ENCODE measurements at regions of chr14 and their contacts with region 1.

Region 1: DNA sequence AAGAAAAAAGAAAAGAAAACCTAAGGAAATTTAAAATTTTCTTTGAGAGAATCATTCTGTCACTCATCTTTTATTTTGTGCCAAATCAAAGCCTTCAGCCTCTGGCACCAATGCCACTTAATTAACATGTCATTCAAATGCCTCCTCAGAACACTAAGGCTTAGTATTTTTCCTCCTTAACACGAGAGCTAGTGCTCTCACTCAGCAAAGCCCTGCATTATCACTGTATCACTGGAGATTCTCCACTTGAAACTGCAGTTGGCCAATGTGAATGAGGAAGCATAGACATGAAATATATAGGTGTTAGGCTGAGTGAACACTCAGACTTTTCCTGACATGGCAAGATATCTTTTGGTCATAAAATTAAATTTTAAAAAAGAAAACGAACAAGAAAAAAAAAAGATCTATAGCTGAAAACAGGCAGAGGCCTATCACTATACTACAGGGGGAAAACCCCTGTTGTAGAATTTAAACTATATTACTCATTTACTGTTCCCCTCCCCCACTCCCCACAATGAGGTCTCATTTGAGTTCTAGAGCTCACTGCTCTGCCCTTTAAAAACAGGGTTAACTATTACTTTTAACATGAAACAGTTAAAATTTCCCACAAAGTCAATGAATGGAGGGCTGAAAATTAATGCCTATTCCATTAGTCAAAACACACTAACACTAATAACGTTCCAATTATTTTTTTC is 5.1 kb downstream of the MBIP start:
- DNase-seq: no peak
- ATAC-seq: no peak
- H3K4me3 ChIP-seq: no peak overlapping the region
- H3K4me3 Mint-ChIP-seq: no peak overlapping the region
- H3K27ac ChIP-seq: no peak overlapping the region
- H3K27ac Mint-ChIP-seq: no peak overlapping the region
- H3K4me1 ChIP-seq: peaks cover 0 to 9% of the 10 kb centered on the region in 2 donors
- H3K4me1 Mint-ChIP-seq: peaks cover 14 to 50% (median 45%) of the 10 kb centered on the region in 7 donors
- H3K27me3 ChIP-seq: no peaks in the 10 kb centered on the region
- H3K27me3 Mint-ChIP-seq: no peaks in the 10 kb centered on the region

Region 2: DNA sequence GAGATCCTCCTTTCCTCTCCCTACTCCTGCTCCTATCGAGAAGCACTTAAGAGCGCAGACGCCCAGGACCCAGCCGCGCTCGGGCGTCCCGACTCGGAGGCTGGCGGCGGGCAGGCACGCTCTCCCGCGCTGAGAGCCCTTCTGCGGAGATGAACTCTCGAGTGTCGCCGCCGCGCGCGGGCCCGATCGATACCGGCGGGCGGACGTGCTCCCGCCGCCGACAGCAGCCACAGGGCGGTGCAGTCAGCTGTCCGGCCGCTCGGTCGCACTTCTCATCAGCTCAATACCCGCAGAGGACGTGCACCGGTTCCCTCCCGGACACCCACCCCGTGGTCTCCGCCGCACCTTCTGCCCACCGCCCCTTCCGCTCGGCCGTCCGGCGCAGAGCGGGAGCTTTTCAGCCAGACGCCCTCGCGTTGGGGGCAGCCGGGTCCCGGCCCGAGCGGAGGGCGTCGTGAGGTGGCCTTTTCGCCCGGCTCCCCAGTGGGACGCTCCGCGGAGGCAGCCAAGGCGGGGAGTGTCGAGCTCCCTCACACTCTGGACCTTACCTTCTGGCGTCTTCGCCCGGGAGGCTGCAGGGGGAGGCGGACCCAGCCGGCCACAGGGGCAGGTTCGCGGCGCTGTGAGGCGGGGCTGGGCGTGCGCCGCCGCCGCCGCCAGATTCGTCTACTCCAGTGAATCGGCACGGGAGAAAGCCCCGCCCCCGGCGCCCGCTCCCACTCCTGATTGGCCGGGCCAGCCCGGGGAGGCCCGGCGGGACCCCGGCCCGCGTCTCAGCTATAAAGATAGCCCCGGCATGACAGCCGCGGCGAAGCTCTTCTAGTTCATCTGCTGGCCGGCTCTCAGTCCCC is 781.7 kb before region 1 on chr14 and contains the start of gene INSM2:
- CTCF ChIA-PET with region 1: no interaction called
- POLR2A ChIA-PET with region 1: no interaction called
- intact Hi-C with region 1: loop called in 1 of 2 experiments (anchors 10 kb)
- DNase-seq: peak in 8 of 9 donors; percentile 9 to 76 (median 21)
- ATAC-seq: peak; percentile 65
- H3K4me3 ChIP-seq: peak within 1 kb of the TSS; percentile 49
- H3K4me3 Mint-ChIP-seq: peak within 1 kb of the TSS; percentile 74 to 86 (median 82)
- H3K27ac ChIP-seq: no peak within 1 kb of the TSS
- H3K27ac Mint-ChIP-seq: no peak within 1 kb of the TSS
- H3K4me1 ChIP-seq: peaks cover 0 to 7% of the 10 kb centered on the region in 2 donors
- H3K4me1 Mint-ChIP-seq: peaks cover 0 to 23% (median 13%) of the 10 kb centered on the region in 7 donors
- H3K27me3 ChIP-seq: peaks cover 3 to 11% of the 10 kb centered on the region in 2 donors
- H3K27me3 Mint-ChIP-seq: peaks cover 53 to 81% (median 60%) of the 10 kb centered on the region in 5 donors
- total RNA-seq, gene INSM2: not detected

Region 3: GRCh38 chr14:36091096-36091495 is 224.2 kb before region 1 on chr14:
- CTCF ChIA-PET with region 1: no interaction called
- POLR2A ChIA-PET with region 1: no interaction called
- intact Hi-C with region 1: no loop called
- DNase-seq: no peak
- ATAC-seq: no peak
- H3K4me3 ChIP-seq: no peak overlapping the region
- H3K4me3 Mint-ChIP-seq: no peak overlapping the region
- H3K27ac ChIP-seq: no peak overlapping the region
- H3K27ac Mint-ChIP-seq: no peak overlapping the region
- H3K4me1 ChIP-seq: no peaks in the 10 kb centered on the region
- H3K4me1 Mint-ChIP-seq: no peaks in the 10 kb centered on the region
- H3K27me3 ChIP-seq: no peaks in the 10 kb centered on the region
- H3K27me3 Mint-ChIP-seq: peaks cover 0 to 31% (median 21%) of the 10 kb centered on the region in 5 donors

Region 4: GRCh38 chr14:36217732-36218131 is 97.6 kb before region 1 on chr14:
- CTCF ChIA-PET with region 1: no interaction called
- POLR2A ChIA-PET with region 1: no interaction called
- intact Hi-C with region 1: no loop called
- DNase-seq: no peak
- ATAC-seq: no peak
- H3K4me3 ChIP-seq: no peak overlapping the region
- H3K4me3 Mint-ChIP-seq: no peak overlapping the region
- H3K27ac ChIP-seq: no peak overlapping the region
- H3K27ac Mint-ChIP-seq: no peak overlapping the region
- H3K4me1 ChIP-seq: no peaks in the 10 kb centered on the region
- H3K4me1 Mint-ChIP-seq: no peaks in the 10 kb centered on the region
- H3K27me3 ChIP-seq: no peaks in the 10 kb centered on the region
- H3K27me3 Mint-ChIP-seq: peaks cover 2 to 41% (median 30%) of the 10 kb centered on the region in 5 donors

Region 5: GRCh38 chr14:36271222-36271621 is 44.1 kb before region 1 on chr14:
- CTCF ChIA-PET with region 1: no interaction called
- POLR2A ChIA-PET with region 1: no interaction called
- intact Hi-C with region 1: no loop called
- DNase-seq: no peak
- ATAC-seq: no peak
- H3K4me3 ChIP-seq: no peak overlapping the region
- H3K4me3 Mint-ChIP-seq: peak overlapping the region in 1 of 10 donors; percentile 71
- H3K27ac ChIP-seq: no peak overlapping the region
- H3K27ac Mint-ChIP-seq: no peak overlapping the region
- H3K4me1 ChIP-seq: no peaks in the 10 kb centered on the region
- H3K4me1 Mint-ChIP-seq: peaks cover 7 to 21% (median 11%) of the 10 kb centered on the region in 7 donors
- H3K27me3 ChIP-seq: peaks cover 0 to 6% of the 10 kb centered on the region in 2 donors
- H3K27me3 Mint-ChIP-seq: peaks cover 49 to 60% (median 53%) of the 10 kb centered on the region in 5 donors

Region 6: GRCh38 chr14:36281309-36281708 is 34.0 kb before region 1 on chr14:
- CTCF ChIA-PET with region 1: no interaction called
- POLR2A ChIA-PET with region 1: no interaction called
- intact Hi-C with region 1: no loop called
- DNase-seq: no peak
- ATAC-seq: no peak
- H3K4me3 ChIP-seq: no peak overlapping the region
- H3K4me3 Mint-ChIP-seq: no peak overlapping the region
- H3K27ac ChIP-seq: no peak overlapping the region
- H3K27ac Mint-ChIP-seq: no peak overlapping the region
- H3K4me1 ChIP-seq: no peaks in the 10 kb centered on the region
- H3K4me1 Mint-ChIP-seq: peaks cover 0 to 5% (median 0%) of the 10 kb centered on the region in 7 donors
- H3K27me3 ChIP-seq: no peaks in the 10 kb centered on the region
- H3K27me3 Mint-ChIP-seq: peaks cover 10 to 58% (median 35%) of the 10 kb centered on the region in 5 donors